Activated CD4-positive, alpha-beta T cell treated with anti-CD3 and anti-CD28 coated beads for 36 hours (primary cell): ENCODE measurements at regions of chr7 and their contacts with region 1.

Region 1: DNA sequence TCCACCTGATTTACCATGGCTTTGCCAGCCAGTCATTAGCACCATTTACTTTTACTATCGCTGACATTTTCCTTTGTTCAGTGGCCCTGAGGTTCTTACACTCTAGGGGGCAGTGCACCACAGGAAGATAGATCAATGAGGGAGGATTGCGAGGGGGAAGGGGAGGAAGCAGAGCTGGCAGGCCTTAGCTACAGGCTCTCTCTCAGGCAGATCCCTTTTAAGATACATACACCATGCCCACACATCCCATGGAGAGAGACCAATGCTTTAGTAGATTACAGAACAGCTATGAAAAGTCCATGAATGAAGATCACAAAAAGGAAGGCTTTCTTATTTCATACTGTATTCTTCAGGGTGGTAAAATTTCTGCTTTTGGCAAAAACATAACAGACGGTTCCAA is 47.4 kb downstream of the DENND11 start:
- DNase-seq: peak; percentile 77
- ATAC-seq: peak; percentile 97
- H3K4me3 Mint-ChIP-seq: no peak overlapping the region
- H3K27ac Mint-ChIP-seq: peak overlapping the region; percentile 79
- H3K4me1 Mint-ChIP-seq: peaks cover 5% of the 10 kb centered on the region
- H3K27me3 Mint-ChIP-seq: no peaks in the 10 kb centered on the region

Region 2: DNA sequence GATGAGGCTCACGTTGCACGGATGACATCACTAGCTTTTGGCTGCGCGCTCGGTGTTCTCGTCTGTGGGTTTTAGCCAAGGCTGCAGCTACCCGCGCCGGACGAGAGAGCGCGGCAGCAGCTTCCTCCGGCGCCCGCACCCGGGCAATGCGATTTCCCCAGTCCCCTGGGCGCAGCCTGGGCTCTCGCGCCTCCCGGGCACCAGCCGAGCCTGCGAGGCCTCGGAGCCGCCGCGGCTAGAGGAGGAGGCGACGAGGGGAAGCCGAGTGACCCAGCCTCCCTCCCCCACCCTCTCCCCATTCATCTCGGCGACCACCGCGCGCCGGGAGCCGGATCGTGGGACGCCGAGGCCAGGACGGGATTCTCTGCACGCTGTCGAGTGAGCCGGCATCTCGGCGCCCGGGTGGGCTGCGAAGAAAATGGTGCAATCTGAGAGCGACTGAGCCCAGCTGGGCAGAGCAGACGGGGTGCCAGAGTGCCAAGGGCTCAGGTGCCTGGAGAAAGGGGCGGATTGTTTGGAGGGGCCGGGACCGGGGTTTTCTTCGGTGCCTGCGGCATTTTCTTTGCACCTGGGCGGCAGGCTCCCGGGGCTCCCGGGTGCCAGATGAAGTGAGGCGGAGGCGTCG is 581.9 kb before region 1 on chr7:
- CTCF ChIA-PET with region 1: interaction called, 3 read pairs
- POLR2A ChIA-PET with region 1: no interaction called
- intact Hi-C with region 1: loop called in 1 of 2 experiments (anchors 5 kb)
- DNase-seq: peak; percentile 54
- ATAC-seq: peak; percentile 42
- H3K4me3 Mint-ChIP-seq: peak overlapping the region; percentile 52
- H3K27ac Mint-ChIP-seq: no peak overlapping the region
- H3K4me1 Mint-ChIP-seq: peaks cover 16% of the 10 kb centered on the region
- H3K27me3 Mint-ChIP-seq: peaks cover 48% of the 10 kb centered on the region

Region 3: DNA sequence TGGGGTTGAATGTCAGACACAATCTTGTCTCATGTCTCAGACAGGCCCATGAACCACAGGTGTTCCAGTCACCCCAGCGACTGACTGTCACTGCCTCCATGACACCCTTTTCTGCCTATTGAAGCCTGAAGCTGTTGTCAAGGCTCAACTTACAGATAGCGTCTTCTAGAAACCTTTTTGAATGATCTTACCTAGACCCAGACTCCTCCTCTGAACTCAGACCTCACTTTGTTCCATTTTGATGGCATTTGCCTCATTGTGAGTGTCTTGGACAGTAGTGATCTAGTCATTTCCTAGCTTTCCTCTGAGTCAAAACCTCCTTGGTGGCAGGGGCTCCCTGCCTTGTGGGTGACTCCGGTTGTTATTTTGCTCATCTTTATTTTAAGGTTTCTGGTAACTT is 201.6 kb before region 1 on chr7:
- CTCF ChIA-PET with region 1: no interaction called
- POLR2A ChIA-PET with region 1: no interaction called
- intact Hi-C with region 1: no loop called
- DNase-seq: peak; percentile 30
- ATAC-seq: peak; percentile 90
- H3K4me3 Mint-ChIP-seq: no peak overlapping the region
- H3K27ac Mint-ChIP-seq: no peak overlapping the region
- H3K4me1 Mint-ChIP-seq: no peaks in the 10 kb centered on the region
- H3K27me3 Mint-ChIP-seq: peaks cover 10% of the 10 kb centered on the region

Region 4: GRCh38 chr7:141641876-141642275 is 12.7 kb before region 1 on chr7:
- CTCF ChIA-PET with region 1: interaction called, 20 read pairs
- POLR2A ChIA-PET with region 1: no interaction called
- intact Hi-C with region 1: no loop called
- DNase-seq: no peak
- ATAC-seq: no peak
- H3K4me3 Mint-ChIP-seq: no peak overlapping the region
- H3K27ac Mint-ChIP-seq: no peak overlapping the region
- H3K4me1 Mint-ChIP-seq: no peaks in the 10 kb centered on the region
- H3K27me3 Mint-ChIP-seq: no peaks in the 10 kb centered on the region

Region 5: GRCh38 chr7:141701489-141702046 is 47.0 kb after region 1 on chr7:
- CTCF ChIA-PET with region 1: interaction called, 3 read pairs
- POLR2A ChIA-PET with region 1: no interaction called
- intact Hi-C with region 1: loop called in 1 of 2 experiments (anchors 1 kb)
- DNase-seq: peak; percentile 82
- ATAC-seq: peak; percentile 84
- H3K4me3 Mint-ChIP-seq: peak overlapping the region; percentile 77
- H3K27ac Mint-ChIP-seq: peak overlapping the region; percentile 56
- H3K4me1 Mint-ChIP-seq: peaks cover 47% of the 10 kb centered on the region
- H3K27me3 Mint-ChIP-seq: no peaks in the 10 kb centered on the region

Region 6: DNA sequence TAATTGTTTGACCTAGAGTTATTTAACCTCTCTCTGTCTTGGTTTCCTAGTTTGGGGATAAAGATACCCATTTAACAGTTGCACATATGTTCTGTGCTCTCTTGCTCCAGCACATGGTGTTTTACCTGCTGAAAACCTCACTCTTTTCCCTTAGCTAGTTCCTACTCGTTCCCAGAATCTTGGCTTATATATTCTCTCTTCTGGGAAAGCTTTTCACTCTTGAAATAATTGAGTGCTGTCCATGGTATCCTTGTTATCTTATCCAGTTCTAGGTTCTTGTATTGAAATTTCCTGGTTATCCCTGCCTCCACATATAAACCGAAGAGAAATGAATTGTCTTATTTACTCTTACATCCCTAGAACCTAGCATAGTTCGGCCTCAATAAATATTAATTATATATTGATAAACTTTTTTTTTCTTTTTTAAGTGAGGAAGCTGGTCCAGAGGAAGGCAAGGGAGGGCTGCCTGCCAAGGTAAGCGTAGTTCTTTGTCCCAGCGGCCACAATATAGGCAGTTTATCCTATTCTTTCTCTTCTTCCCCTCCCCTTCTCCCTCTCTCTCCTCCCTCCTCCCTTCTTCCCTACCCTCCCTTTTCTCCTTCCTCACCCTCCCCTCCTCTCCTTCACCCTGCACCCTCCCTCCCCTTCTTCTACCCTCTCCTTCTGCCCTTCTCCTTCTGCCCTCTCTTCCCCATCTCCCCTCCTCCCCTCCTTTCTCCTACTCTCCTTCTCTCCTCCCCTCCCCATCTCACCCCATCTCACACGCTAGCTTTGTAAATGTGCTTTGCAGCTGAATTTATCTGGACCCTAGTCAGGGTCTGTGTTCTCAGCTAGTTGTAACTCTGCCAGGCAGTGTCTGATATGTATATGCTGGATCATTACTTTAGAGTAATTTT is 61.5 kb after region 1 on chr7:
- CTCF ChIA-PET with region 1: interaction called, 10 read pairs
- POLR2A ChIA-PET with region 1: interaction called, 4 read pairs
- intact Hi-C with region 1: no loop called
- DNase-seq: no peak
- ATAC-seq: no peak
- H3K4me3 Mint-ChIP-seq: no peak overlapping the region
- H3K27ac Mint-ChIP-seq: no peak overlapping the region
- H3K4me1 Mint-ChIP-seq: peaks cover 8% of the 10 kb centered on the region
- H3K27me3 Mint-ChIP-seq: no peaks in the 10 kb centered on the region

Region 7: DNA sequence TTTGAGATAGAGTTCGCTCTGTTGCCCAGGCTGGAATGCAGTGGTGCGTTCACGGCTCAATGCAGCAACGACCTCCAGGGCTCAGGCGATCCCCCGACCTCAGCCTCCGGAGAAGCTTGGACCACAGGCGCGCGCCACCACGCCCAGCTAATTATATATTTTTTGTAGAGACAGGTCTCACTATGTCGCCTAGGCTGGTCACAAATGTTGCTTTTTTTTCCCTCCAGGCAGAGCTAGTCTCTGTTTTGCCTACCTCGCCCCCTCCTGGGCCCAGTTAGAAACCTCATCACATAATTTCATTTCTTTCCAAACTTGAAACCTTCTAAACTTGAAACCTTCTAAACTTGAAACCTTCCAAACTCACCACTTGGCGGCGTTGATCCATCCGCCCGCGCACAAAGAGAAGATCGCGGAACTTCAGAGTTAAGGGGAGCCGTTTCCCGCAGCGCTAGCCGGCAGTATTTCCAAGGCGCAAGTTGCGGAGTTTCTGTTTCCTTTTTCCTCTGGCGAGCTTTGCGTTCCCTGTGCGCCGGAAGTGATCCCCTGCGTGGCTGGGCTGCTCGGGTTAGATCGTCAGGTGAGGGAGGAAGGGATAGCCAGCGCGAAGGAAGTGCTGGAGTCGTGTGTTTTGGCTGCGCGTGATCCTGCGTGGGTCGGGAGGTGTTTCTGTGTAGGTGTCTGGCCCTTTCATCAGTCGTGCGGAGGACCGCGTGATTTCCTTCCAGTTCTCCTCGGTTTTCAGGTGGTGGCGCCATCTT is 83.5 kb after region 1 on chr7 and contains the start of gene SSBP1:
- CTCF ChIA-PET with region 1: interaction called, 48 read pairs
- POLR2A ChIA-PET with region 1: interaction called, 3 read pairs
- intact Hi-C with region 1: loop called (anchors 1 kb)
- DNase-seq: peak; percentile 95
- ATAC-seq: peak; percentile 89
- H3K4me3 Mint-ChIP-seq: peak within 1 kb of the TSS; percentile 96
- H3K27ac Mint-ChIP-seq: peak within 1 kb of the TSS; percentile 97
- H3K4me1 Mint-ChIP-seq: peaks cover 40% of the 10 kb centered on the region
- H3K27me3 Mint-ChIP-seq: no peaks in the 10 kb centered on the region
- total RNA-seq, gene SSBP1: 183 to 245 TPM

Region 8: DNA sequence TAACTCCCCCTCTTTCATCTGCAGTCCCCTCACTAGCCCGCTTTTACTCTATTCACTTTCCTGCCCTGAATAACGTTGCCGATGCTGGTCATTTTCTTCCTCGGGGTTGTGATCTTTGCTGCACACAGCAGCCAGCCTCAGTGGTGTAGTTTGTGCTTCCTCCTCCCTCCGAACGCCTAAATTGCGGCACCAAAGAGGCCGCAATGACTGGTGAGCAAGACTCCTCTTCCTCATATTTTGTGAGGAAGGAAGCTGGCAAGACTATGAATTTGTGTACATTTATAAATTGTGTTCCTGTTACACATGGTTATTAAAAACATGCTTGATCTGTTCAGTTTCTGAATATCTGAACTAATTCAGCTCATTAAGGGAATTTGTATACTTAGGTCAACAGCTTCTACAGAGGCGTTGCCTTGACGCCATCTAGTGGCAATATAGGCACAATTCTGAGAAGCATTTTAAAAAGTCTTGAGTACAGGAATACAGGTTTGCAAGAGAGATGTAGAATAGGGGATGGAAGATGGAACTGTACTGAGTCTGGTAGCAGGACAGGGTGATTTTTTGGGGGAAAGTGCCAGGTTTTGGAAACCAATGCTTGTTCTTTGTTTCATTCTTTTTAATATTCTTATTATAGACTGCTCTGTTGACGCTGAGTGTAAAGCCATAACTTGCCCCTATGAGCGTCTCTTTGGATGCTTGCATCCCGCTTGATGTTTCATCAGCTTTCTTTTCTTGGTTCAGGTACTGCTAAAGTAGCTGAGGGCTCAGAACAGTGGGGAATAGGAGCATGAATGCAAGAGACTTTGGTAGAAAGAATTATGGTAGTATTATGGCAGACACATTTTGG is 131.4 kb after region 1 on chr7:
- CTCF ChIA-PET with region 1: interaction called, 34 read pairs
- POLR2A ChIA-PET with region 1: no interaction called
- intact Hi-C with region 1: loop called (anchors 1 kb)
- DNase-seq: peak; percentile 42
- ATAC-seq: peak; percentile 49
- H3K4me3 Mint-ChIP-seq: no peak overlapping the region
- H3K27ac Mint-ChIP-seq: no peak overlapping the region
- H3K4me1 Mint-ChIP-seq: no peaks in the 10 kb centered on the region
- H3K27me3 Mint-ChIP-seq: no peaks in the 10 kb centered on the region

Region 9: DNA sequence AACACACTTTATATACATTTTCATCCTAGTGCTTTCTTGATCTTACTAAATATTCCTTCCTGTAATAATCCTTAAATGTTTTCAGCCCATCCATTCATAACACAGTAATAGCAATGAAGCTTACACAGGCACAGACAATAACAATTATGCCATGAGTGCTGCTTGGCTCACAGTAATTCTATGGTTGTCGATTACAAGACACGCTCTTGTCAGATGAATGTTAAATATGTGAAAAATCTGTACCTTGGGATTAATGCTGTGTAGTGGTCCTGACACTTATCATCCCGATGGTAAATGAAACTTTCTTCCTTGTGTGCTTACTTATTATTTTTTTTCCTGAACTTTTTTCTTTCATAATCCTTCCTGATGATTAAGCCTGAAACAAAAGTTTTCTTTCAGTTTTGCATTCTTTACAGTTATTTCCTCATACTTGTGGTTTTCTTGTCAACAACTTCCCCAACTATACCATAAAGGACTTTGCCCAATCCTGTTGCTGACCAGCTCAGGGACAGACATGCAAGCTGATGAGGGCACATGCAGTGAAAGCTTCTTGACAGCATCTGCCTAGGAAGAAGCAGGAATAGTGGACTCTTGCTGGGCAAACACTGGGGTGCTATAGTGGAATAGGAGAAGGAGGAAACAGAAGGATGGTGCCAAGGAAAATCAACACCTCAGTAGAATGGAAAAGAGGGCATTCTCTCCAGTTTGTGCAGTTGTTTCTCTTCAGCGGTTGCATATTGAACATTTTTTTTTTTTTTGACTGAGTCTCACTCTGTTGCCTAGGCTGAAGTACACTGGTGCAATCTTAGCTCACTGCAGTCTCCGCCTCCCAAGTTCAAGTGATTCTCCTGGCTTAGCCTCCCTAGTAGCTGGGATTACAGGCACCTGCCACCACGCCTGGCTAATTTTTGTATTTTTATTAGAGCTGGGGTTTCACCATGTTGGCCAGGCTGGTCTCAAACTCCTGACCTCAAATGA is 450.3 kb after region 1 on chr7:
- CTCF ChIA-PET with region 1: no interaction called
- POLR2A ChIA-PET with region 1: no interaction called
- intact Hi-C with region 1: no loop called
- DNase-seq: no peak
- ATAC-seq: no peak
- H3K4me3 Mint-ChIP-seq: no peak overlapping the region
- H3K27ac Mint-ChIP-seq: no peak overlapping the region
- H3K4me1 Mint-ChIP-seq: no peaks in the 10 kb centered on the region
- H3K27me3 Mint-ChIP-seq: peaks cover 4% of the 10 kb centered on the region

Region 10: DNA sequence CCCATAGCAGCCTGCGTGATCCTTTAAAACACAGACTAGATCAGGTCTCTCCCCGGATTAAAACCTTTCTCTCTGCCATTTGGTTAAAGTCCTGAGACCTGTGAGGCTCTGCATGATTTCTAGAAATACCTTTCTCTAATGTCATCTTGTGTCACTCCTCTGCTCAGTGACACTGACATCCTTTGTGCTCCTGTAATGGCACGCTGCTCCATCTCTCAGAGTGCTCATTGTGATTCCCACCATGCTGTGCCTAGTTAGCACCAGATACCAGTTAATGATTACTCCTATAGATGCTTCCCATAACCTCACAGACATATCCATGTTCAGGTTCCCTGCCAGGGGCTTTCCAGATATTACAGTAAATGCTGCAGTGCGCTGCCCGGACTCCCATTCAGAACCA is 1384.1 kb after region 1 on chr7:
- CTCF ChIA-PET with region 1: no interaction called
- POLR2A ChIA-PET with region 1: no interaction called
- intact Hi-C with region 1: no loop called
- DNase-seq: no peak
- ATAC-seq: no peak
- H3K4me3 Mint-ChIP-seq: no peak overlapping the region
- H3K27ac Mint-ChIP-seq: no peak overlapping the region
- H3K4me1 Mint-ChIP-seq: no peaks in the 10 kb centered on the region
- H3K27me3 Mint-ChIP-seq: peaks cover 12% of the 10 kb centered on the region